ENCODE measurements at regions of chr1 and their contacts with region 1.

Region 1: GRCh38 chr1:227140376-227140775 is 177.9 kb downstream of the CDC42BPA start:
- DNase-seq: no peak
- ATAC-seq: no peak
- H3K4me3 ChIP-seq: no peak overlapping the region
- H3K27ac ChIP-seq: no peak overlapping the region
- H3K4me1 ChIP-seq: peaks cover 0 to 8% (median 0%) of the 10 kb centered on the region in 12 donors
- H3K27me3 ChIP-seq: no peaks in the 10 kb centered on the region
- CTCF ChIP-seq: no peak
- POLR2A ChIP-seq: no peak

Region 2: DNA sequence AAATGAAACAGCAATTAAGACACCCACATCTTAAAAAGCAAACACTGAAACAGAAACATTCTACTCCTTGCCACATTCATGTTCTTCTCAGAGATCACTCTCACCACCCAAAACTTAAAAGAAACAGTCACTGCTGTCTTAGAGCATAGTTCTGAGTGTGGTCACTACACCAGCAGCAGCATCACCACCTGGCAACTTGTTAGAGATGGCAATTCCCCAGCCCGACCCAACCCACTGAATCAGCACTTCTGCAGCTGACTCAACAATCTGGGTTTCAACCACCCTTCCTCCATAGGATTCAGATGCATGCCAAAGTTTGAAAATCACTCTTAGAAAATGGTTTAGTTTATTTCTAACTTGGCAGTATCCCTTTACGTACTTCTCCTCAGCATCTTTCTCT is 51.8 kb after region 1 on chr1:
- intact Hi-C with region 1: loop called in 1 of 10 experiments (anchors 5 kb)
- DNase-seq: peak in 2 of 5 donors; percentile 34 to 41
- ATAC-seq: peak in 2 of 4 donors; percentile 34 to 54
- H3K4me3 ChIP-seq: no peak overlapping the region
- H3K27ac ChIP-seq: no peak overlapping the region
- H3K4me1 ChIP-seq: peaks cover 0 to 11% (median 0%) of the 10 kb centered on the region in 12 donors
- H3K27me3 ChIP-seq: no peaks in the 10 kb centered on the region
- CTCF ChIP-seq: no peak
- POLR2A ChIP-seq: no peak

Measured in heart left ventricle (tissue), 16 donors.